Mammary epithelial cell (primary cell): ENCODE measurements at regions of chr2 and their contacts with region 1.

Region 1: DNA sequence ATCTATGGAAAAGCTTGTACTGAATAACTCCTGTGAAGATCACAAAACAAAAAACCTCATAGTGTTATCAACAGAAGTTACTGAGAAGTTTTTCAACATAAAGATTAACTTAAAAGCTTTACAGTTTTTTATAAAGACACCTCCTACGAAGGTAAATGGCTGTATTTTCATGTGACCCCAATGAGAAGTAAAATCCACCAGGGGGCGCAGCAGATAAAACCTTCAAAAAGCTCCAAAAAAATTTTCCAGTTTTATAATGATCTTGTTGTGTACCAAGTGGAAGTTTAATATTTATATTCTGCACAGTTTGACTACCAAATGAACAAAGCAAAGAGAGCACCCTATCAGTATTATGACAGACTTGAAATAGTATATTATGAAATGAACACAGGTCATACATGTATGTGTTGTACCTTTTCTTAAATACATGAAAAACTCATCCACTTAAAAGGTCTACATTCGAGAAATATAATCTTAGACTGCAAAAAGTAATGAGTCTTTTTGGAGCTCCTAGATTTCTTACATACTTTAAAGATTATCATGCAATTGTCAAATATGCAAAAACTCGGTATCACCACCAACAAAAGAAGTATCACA is 38.5 kb downstream of the PNO1 start:
- DNase-seq: peak; percentile 27
- H3K4me3 ChIP-seq: no peak overlapping the region
- H3K27ac ChIP-seq: no peak overlapping the region
- H3K4me1 ChIP-seq: peaks cover 21% of the 10 kb centered on the region
- H3K27me3 ChIP-seq: no peaks in the 10 kb centered on the region
- CTCF ChIP-seq: peak; percentile 29 to 46

Region 2: DNA sequence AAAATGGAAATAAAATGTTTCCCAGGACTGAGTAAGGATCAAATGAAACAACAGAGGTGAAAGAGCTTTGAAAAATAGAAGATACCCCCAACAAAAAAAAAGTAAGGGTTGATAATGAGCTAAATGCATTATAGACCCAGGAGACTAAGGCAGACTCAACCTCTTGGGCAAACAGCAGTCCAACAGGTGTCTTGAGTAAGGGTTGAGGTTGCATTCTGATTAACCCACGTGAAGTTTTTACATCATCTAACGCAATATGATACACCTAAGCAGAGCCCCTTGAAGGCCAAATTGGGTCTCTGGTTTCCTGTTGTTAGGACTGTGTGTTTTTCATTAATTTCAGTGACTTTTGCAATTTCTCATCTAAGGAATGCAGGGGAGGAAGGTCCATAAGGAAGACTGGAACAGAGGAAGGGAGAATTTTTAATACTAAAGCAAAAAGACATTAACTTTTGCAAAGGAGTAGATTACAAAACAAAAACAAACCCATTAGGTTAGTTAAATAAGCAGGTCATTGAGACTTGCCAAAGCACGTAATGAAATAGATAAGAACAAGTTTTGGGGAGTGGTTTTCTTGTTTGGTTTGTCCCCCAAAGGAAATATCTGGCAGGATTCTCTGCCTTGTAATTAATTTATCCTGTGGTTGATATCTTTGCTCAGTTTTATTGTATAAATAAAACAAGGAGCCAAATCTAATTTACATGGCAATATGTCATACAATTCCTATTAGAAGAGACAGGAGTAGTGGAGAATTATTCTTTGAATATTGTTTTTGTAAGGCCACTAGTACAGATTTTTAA is 554.8 kb before region 1 on chr2:
- CTCF ChIA-PET with region 1: no interaction called
- dilution Hi-C with region 1: no loop called
- in situ Hi-C with region 1: no loop called
- intact Hi-C with region 1: no loop called
- DNase-seq: no peak
- H3K4me3 ChIP-seq: no peak overlapping the region
- H3K27ac ChIP-seq: no peak overlapping the region
- H3K4me1 ChIP-seq: no peaks in the 10 kb centered on the region
- H3K27me3 ChIP-seq: no peaks in the 10 kb centered on the region
- CTCF ChIP-seq: no peak

Region 3: DNA sequence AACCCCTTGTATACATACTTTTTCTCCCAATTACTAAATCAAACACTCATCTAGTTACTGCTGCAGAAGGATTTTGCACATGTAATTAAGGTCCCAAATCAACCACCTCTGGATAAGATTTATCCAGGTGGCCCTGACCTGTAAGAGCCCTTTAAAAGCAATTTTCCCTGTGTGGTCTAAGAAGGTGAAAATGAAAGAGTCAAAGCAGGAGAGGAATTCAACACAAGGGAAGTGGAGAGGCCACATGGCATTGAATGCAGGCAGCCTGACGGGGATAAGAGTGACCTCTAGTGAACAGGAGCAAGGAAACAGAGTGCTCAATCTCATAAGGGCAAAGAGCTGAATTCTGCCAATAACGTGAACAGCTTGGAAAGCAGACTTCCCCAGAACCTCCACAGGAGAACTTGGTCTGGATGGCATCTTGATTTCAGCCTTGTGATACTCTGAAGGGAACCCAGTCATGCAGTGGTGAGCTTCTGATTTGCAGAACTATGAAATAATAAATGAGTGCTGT is 29.0 kb after region 1 on chr2:
- CTCF ChIA-PET with region 1: interaction called, 14 read pairs
- dilution Hi-C with region 1: no loop called
- in situ Hi-C with region 1: no loop called
- intact Hi-C with region 1: loop called (anchors 1 kb)
- DNase-seq: peak; percentile 57
- H3K4me3 ChIP-seq: no peak overlapping the region
- H3K27ac ChIP-seq: no peak overlapping the region
- H3K4me1 ChIP-seq: no peaks in the 10 kb centered on the region
- H3K27me3 ChIP-seq: no peaks in the 10 kb centered on the region
- CTCF ChIP-seq: peak; percentile 22 to 57

Region 4: GRCh38 chr2:68244456-68244855 is 48.2 kb after region 1 on chr2:
- CTCF ChIA-PET with region 1: interaction called, 4 read pairs
- dilution Hi-C with region 1: no loop called
- in situ Hi-C with region 1: loop called in 1 of 2 experiments (anchors 10 kb)
- intact Hi-C with region 1: no loop called
- DNase-seq: no peak
- H3K4me3 ChIP-seq: no peak overlapping the region
- H3K27ac ChIP-seq: no peak overlapping the region
- H3K4me1 ChIP-seq: peaks cover 10% of the 10 kb centered on the region
- H3K27me3 ChIP-seq: no peaks in the 10 kb centered on the region
- CTCF ChIP-seq: no peak

Region 5: GRCh38 chr2:68282811-68283418 is 86.7 kb after region 1 on chr2:
- CTCF ChIA-PET with region 1: no interaction called
- dilution Hi-C with region 1: no loop called
- in situ Hi-C with region 1: no loop called
- intact Hi-C with region 1: loop called (anchors 2 kb)
- DNase-seq: peak; percentile 31
- H3K4me3 ChIP-seq: no peak overlapping the region
- H3K27ac ChIP-seq: no peak overlapping the region
- H3K4me1 ChIP-seq: peaks cover 4% of the 10 kb centered on the region
- H3K27me3 ChIP-seq: peaks cover 8% of the 10 kb centered on the region
- CTCF ChIP-seq: peak; percentile 73 to 77

Region 6: GRCh38 chr2:68434981-68435380 is 238.8 kb after region 1 on chr2:
- CTCF ChIA-PET with region 1: no interaction called
- dilution Hi-C with region 1: no loop called
- in situ Hi-C with region 1: no loop called
- intact Hi-C with region 1: no loop called
- DNase-seq: no peak
- H3K4me3 ChIP-seq: no peak overlapping the region
- H3K27ac ChIP-seq: no peak overlapping the region
- H3K4me1 ChIP-seq: no peaks in the 10 kb centered on the region
- H3K27me3 ChIP-seq: no peaks in the 10 kb centered on the region
- CTCF ChIP-seq: no peak